Caco-2 (cell line): ENCODE measurements at regions of chr2 and their contacts with region 1.

Region 1: GRCh38 chr2:149070681-149071387 is 32.3 kb downstream of the LYPD6B start:
- DNase-seq: peak; percentile 75 to 89
- H3K4me3 ChIP-seq: 0 out of 2 replicates have a peak overlapping the region, but pooled peaks have one; percentile 3
- H3K4me3 Mint-ChIP-seq: peak overlapping the region; percentile 63
- H3K27ac Mint-ChIP-seq: peak overlapping the region; percentile 80
- H3K4me1 ChIP-seq: peaks cover 29% of the 10 kb centered on the region
- H3K4me1 Mint-ChIP-seq: peaks cover 53% of the 10 kb centered on the region
- H3K27me3 ChIP-seq: no peaks in the 10 kb centered on the region; the same call in 1 of the 2 replicates
- H3K27me3 Mint-ChIP-seq: no peaks in the 10 kb centered on the region
- CTCF ChIP-seq: no peak

Region 2: GRCh38 chr2:149160701-149161217 is 89.9 kb after region 1 on chr2:
- CTCF ChIA-PET with region 1: no interaction called
- POLR2A ChIA-PET with region 1: no interaction called
- intact Hi-C with region 1: loop called (anchors 5 kb)
- DNase-seq: peak; percentile 47 to 56
- H3K4me3 ChIP-seq: no peak overlapping the region
- H3K4me3 Mint-ChIP-seq: peak overlapping the region; percentile 57
- H3K27ac Mint-ChIP-seq: peak overlapping the region; percentile 68
- H3K4me1 ChIP-seq: peaks cover 34% of the 10 kb centered on the region
- H3K4me1 Mint-ChIP-seq: peaks cover 25% of the 10 kb centered on the region
- H3K27me3 ChIP-seq: no peaks in the 10 kb centered on the region
- H3K27me3 Mint-ChIP-seq: no peaks in the 10 kb centered on the region
- CTCF ChIP-seq: no peak